ENCODE measurements at regions of chr14 and their contacts with region 1.

Region 1: DNA sequence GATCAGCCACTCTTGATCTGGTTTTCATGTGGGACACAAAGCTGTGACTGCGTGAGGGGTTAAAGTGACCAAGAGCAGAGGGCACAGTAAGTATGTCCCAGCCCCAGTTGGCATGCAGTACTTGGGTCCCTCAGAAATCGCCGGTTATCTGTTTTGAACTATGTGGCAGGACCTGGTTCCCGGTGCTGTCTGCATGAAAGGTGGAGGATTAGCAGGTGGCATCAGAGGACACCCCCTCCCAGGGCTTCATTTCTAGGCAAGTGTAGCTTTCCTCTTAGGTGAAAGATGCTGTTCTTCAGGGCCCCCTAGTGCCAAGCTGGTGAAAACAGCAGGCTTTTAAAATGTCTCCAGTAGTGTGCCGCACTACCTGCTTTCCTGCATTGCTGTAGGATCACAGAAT is 57.1 kb downstream of the ATG14 start:
- DNase-seq: peak; percentile 27 to 59
- ATAC-seq: peak; percentile 79 to 91
- H3K4me3 ChIP-seq: no peak overlapping the region
- H3K27ac ChIP-seq: peak overlapping the region in 3 of 4 donors; percentile 64 to 74 (median 71)
- H3K4me1 ChIP-seq: peaks cover 11 to 14% of the 10 kb centered on the region in 2 donors
- H3K27me3 ChIP-seq: no peaks in the 10 kb centered on the region
- CTCF ChIP-seq: peak; percentile 40 to 67 (median 57)
- POLR2A ChIP-seq: no peak

Region 2: GRCh38 chr14:55212634-55213033 is 141.9 kb before region 1 on chr14:
- in situ Hi-C with region 1: no loop called
- intact Hi-C with region 1: loop called (anchors 2 kb)
- DNase-seq: no peak
- ATAC-seq: no peak
- H3K4me3 ChIP-seq: no peak overlapping the region
- H3K27ac ChIP-seq: no peak overlapping the region
- H3K4me1 ChIP-seq: no peaks in the 10 kb centered on the region
- H3K27me3 ChIP-seq: no peaks in the 10 kb centered on the region
- CTCF ChIP-seq: no peak
- POLR2A ChIP-seq: no peak

Region 3: GRCh38 chr14:55265197-55265596 is 89.3 kb before region 1 on chr14:
- in situ Hi-C with region 1: loop called in 2 of 4 experiments (anchors 10 kb)
- intact Hi-C with region 1: no loop called
- DNase-seq: no peak
- ATAC-seq: no peak
- H3K4me3 ChIP-seq: no peak overlapping the region
- H3K27ac ChIP-seq: no peak overlapping the region
- H3K4me1 ChIP-seq: no peaks in the 10 kb centered on the region
- H3K27me3 ChIP-seq: no peaks in the 10 kb centered on the region
- CTCF ChIP-seq: no peak
- POLR2A ChIP-seq: no peak

Region 4: DNA sequence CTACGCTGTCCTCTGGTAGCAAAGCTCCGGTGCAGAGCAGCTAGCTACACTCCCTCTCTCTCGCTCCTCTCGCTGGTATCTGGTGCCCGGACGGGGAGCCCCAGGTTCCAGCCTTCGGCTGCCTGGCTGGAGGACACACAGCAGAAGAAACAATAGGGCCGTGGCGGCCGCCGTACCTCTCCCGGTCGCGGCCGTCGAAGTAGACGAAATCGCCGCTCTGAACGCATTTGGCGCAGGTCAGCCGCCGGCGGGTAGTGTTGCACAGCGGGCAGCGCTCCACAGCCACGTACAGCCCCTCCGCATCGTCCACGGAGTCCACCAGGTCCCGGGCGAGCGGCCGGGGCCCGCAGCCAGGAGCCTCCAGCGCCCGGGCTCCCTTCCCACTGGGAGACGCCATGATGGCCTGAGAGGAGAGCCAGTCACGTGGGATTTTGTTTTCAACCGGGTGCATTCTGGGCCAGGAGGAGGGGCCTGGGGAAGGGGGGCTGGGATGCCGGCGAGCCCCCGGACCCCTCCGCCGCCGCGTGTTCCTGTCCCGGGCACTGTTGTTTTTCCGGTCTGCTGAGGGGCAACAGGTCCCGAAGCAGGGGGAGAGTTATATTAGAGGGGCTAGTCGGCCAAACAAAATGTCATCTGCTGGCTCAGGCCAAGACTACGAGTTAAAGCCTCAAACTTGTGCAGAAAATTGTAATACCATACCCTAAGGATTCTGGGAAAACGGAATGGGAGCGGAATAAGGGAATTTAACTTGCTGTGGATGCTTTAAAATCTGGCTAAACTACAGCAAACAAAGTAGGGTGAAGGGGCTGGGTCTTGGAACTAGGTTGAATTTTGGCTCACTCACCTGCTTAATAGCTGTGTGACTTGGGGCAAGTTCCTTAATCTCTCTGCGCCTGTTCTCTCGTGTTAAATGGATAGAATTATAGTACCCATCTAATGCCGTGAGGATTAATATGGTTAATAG is 57.2 kb after region 1 on chr14 and contains the start of gene ATG14:
- in situ Hi-C with region 1: no loop called
- intact Hi-C with region 1: loop called (anchors 5 kb)
- DNase-seq: peak; percentile 81 to 88
- ATAC-seq: peak; percentile 94 to 98
- H3K4me3 ChIP-seq: peak within 1 kb of the TSS; percentile 82 to 98 (median 90)
- H3K27ac ChIP-seq: peak within 1 kb of the TSS; percentile 87 to 97 (median 95)
- H3K4me1 ChIP-seq: peaks cover 26 to 28% of the 10 kb centered on the region in 2 donors
- H3K27me3 ChIP-seq: no peaks in the 10 kb centered on the region
- CTCF ChIP-seq: peak in 2 of 5 experiments; percentile 9 to 15
- POLR2A ChIP-seq: peak; percentile 47 to 84
- total RNA-seq, gene ATG14: 12.6 to 20.0 (median 15.6) TPM

Region 5: DNA sequence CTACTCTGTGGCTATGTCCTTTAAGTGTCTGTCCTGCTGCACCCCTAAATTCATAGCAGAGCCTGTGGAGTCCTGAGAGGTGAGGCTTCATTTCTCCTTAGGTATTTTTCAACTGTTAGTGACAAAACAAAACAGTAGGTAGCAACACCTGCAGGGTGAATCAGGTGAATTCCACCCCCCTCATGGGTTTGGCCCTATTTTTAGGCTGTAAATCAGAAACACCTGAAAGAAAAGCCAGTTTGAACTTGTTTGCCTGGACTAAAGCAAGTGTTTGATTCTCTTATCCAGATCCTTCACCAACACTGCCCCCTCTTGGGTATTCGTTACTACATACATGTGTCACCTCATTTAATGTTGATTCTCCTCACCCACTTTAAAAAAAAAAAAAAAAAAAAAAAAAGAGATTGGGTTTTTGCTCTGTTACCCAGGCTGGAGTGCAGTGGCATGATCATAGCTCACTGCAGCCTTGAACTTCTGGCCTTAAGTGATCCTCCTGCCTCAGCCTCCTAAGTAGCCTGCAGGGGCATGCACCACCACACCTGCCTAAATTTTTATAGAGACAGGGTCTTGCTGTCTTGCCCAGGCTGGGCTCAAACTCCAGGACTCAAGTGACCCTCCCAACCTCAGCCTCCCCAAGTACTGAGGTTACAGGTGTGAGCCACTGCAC is 75.7 kb after region 1 on chr14:
- in situ Hi-C with region 1: no loop called
- intact Hi-C with region 1: loop called (anchors 5 kb)
- DNase-seq: peak in 1 of 2 donors; percentile 20
- ATAC-seq: peak; percentile 95 to 96
- H3K4me3 ChIP-seq: no peak overlapping the region
- H3K27ac ChIP-seq: peak overlapping the region in 1 of 4 donors; percentile 2
- H3K4me1 ChIP-seq: no peaks in the 10 kb centered on the region
- H3K27me3 ChIP-seq: no peaks in the 10 kb centered on the region
- CTCF ChIP-seq: peak; percentile 18 to 62 (median 51)
- POLR2A ChIP-seq: no peak

Measured in gastrocnemius medialis (tissue), 4 donors.